Left cardiac atrium (tissue), 4 donors: ENCODE measurements at regions of chr7 and their contacts with region 1.

Region 1: GRCh38 chr7:47285860-47286522 is 295.9 kb downstream of the TNS3 start:
- DNase-seq: no peak
- ATAC-seq: peak; percentile 39 to 42

Region 2: GRCh38 chr7:47327698-47328391 is 41.9 kb after region 1 on chr7:
- intact Hi-C with region 1: loop called in 1 of 2 experiments (anchors 5 kb)
- DNase-seq: peak; percentile 90
- ATAC-seq: peak; percentile 85 to 91

Region 3: GRCh38 chr7:47371729-47372368 is 85.9 kb after region 1 on chr7:
- intact Hi-C with region 1: loop called in 1 of 2 experiments (anchors 10 kb)
- DNase-seq: peak; percentile 85
- ATAC-seq: peak; percentile 81 to 83